Ovary (tissue), 10 donors: ENCODE measurements at regions of chr22 and their contacts with region 1.

Region 1: GRCh38 chr22:34111210-34111824 is 191.0 kb upstream of the LARGE1 start:
- DNase-seq: peak; percentile 13 to 39 (median 27)
- H3K4me3 ChIP-seq: no peak overlapping the region
- H3K27ac ChIP-seq: no peak overlapping the region
- H3K4me1 ChIP-seq: no peaks in the 10 kb centered on the region
- H3K27me3 ChIP-seq: no peaks in the 10 kb centered on the region
- CTCF ChIP-seq: peak in 2 of 3 donors; percentile 22 to 34
- EP300 ChIP-seq: no peak
- POLR2A ChIP-seq: no peak

Region 2: GRCh38 chr22:33314316-33314715 is 797.0 kb before region 1 on chr22:
- intact Hi-C with region 1: loop called in 2 of 4 experiments (anchors 10 kb)
- DNase-seq: no peak
- H3K4me3 ChIP-seq: no peak overlapping the region
- H3K27ac ChIP-seq: no peak overlapping the region
- H3K4me1 ChIP-seq: no peaks in the 10 kb centered on the region
- H3K27me3 ChIP-seq: no peaks in the 10 kb centered on the region
- CTCF ChIP-seq: no peak
- EP300 ChIP-seq: no peak
- POLR2A ChIP-seq: no peak